ENCODE measurements at regions of chr11 and their contacts with region 1.

Region 1: DNA sequence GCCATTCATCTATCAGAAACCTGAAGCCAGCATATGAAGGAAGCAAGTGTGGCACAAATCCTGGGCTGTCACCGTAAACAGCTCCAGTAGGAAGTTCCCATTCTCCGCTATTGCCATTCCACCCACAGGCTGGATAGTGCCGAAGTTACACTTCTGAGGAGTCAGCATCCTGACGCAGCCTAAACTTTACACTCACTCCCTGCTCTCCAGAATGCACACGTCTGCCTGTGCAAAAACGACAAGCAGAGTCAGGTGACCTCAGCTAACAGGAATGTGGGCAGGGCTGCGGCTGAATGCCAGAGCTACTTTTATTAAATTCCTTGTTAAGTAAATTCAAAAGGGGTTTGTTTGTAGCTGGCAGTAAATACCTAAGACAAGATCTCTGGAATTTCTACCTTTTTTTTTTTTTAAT is 33.7 kb downstream of the NFRKB start:
- DNase-seq: no peak
- ATAC-seq: no peak
- H3K4me3 ChIP-seq: no peak overlapping the region
- H3K4me3 Mint-ChIP-seq: no peak overlapping the region
- H3K27ac ChIP-seq: no peak overlapping the region
- H3K27ac Mint-ChIP-seq: peak overlapping the region; percentile 99
- H3K4me1 ChIP-seq: peaks cover 49% of the 10 kb centered on the region
- H3K4me1 Mint-ChIP-seq: peaks cover 66% of the 10 kb centered on the region
- H3K27me3 ChIP-seq: no peaks in the 10 kb centered on the region
- H3K27me3 Mint-ChIP-seq: no peaks in the 10 kb centered on the region
- CTCF ChIP-seq: no peak

Region 2: DNA sequence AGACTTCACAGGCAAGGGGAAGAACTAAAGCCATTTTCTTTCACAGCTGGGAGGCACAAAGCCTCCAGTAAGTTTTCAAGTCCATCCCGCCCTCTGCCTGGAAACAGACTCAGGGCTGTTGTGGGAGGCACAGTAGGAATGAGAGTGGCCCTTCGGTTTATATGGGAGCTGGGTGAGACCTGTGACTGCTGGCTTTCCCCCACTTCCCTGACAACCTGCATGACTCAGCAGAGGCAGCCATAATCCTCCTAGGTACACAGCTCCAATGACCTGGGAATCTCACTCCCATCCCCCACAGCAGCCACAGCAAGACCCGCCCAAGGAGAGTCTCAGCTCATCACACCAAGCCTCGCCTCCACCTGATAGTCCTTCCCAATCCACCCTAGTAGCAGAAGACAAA is 58.2 kb before region 1 on chr11:
- CTCF ChIA-PET with region 1: no interaction called
- POLR2A ChIA-PET with region 1: interaction called, 26 read pairs
- intact Hi-C with region 1: no loop called
- DNase-seq: no peak
- ATAC-seq: peak; percentile 18
- H3K4me3 ChIP-seq: no peak overlapping the region
- H3K4me3 Mint-ChIP-seq: peak overlapping the region; percentile 57
- H3K27ac ChIP-seq: peak overlapping the region in 1 of 2 donors; percentile 10
- H3K27ac Mint-ChIP-seq: peak overlapping the region; percentile 86
- H3K4me1 ChIP-seq: peaks cover 16% of the 10 kb centered on the region
- H3K4me1 Mint-ChIP-seq: peaks cover 57% of the 10 kb centered on the region
- H3K27me3 ChIP-seq: no peaks in the 10 kb centered on the region
- H3K27me3 Mint-ChIP-seq: peaks cover 6% of the 10 kb centered on the region
- CTCF ChIP-seq: no peak

Measured in CD4-positive, alpha-beta T cell (primary cell).